ENCODE measurements at regions of chr3 and their contacts with region 1.

Region 1: GRCh38 chr3:31908391-31909097 is 72.5 kb downstream of the OSBPL10 start:
- DNase-seq: peak; percentile 20
- H3K4me3 Mint-ChIP-seq: no peak overlapping the region
- H3K27ac Mint-ChIP-seq: peak overlapping the region; percentile 60
- H3K4me1 Mint-ChIP-seq: peaks cover 51% of the 10 kb centered on the region
- H3K27me3 Mint-ChIP-seq: no peaks in the 10 kb centered on the region
- CTCF ChIP-seq: no peak

Region 2: GRCh38 chr3:31848911-31849310 is 59.6 kb before region 1 on chr3:
- CTCF ChIA-PET with region 1: no interaction called
- intact Hi-C with region 1: no loop called
- DNase-seq: no peak
- H3K4me3 Mint-ChIP-seq: no peak overlapping the region
- H3K27ac Mint-ChIP-seq: no peak overlapping the region
- H3K4me1 Mint-ChIP-seq: peaks cover 37% of the 10 kb centered on the region
- H3K27me3 Mint-ChIP-seq: no peaks in the 10 kb centered on the region
- CTCF ChIP-seq: no peak

Region 3: GRCh38 chr3:31968927-31969418 is 60.4 kb after region 1 on chr3:
- CTCF ChIA-PET with region 1: no interaction called
- intact Hi-C with region 1: loop called (anchors 5 kb)
- DNase-seq: peak; percentile 65
- H3K4me3 Mint-ChIP-seq: peak overlapping the region; percentile 52
- H3K27ac Mint-ChIP-seq: peak overlapping the region; percentile 90
- H3K4me1 Mint-ChIP-seq: peaks cover 44% of the 10 kb centered on the region
- H3K27me3 Mint-ChIP-seq: no peaks in the 10 kb centered on the region
- CTCF ChIP-seq: no peak

Measured in Calu3 (cell line).